Activated naive CD4-positive, alpha-beta T cell treated with anti-CD3 and anti-CD28 coated beads, Interleukin-2, amount 10 ng/mL, durations not matched to agents 7 days and 5 days (primary cell): ENCODE measurements at regions of chr3 and their contacts with region 1.

Region 1: DNA sequence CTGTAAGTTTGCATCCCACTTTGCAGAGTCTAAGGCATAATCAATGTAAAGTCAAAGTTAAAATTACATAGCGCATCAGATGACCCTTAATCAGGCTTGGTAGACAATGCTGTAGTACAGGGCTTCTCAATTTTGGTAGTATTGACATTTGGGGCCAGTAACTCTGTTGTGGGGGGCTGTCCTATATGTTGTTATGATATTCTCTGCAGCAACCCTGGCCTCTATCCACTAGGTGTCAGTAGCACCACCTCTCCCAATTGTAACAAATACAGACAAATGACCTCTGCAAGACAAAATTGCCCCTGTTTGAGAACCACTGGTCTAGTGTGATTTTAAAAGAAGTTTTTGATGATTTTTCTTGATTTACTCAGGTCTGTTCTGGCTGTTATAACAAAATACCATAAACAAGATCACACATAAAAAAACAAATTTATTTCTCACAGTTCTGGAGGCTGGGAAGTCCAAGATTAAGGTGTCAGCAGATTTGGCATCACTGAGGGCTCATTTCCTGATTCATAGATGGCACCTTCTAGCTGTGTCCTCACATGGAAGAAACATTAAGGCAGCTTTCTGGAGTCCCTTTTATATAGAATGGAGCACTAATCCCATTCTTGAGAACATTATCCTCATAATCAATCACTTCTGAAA is 37.6 kb upstream of the SLC9A9 start:
- DNase-seq: peak; percentile 39
- H3K4me3 Mint-ChIP-seq: no peak overlapping the region
- H3K27ac Mint-ChIP-seq: no peak overlapping the region
- H3K4me1 Mint-ChIP-seq: no peaks in the 10 kb centered on the region
- H3K27me3 Mint-ChIP-seq: peaks cover 25% of the 10 kb centered on the region

Region 2: DNA sequence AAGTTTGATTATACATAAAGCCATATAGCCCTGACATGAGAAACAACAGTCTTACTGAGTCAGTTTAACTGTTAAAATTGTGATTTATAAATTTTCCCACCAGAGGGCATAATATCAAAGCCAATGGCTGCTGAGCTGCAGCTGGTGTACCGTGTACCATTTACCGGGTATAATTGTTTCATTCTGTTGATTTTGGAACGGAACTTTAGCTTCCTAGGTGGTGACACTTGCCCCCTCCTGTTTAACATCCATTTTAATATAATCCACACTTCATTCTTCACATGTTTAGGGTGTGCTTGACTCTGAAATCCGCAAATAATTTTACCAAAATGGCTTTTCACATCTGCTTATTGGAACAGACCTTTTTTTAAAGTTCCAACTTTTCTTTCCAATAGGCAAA is 110.4 kb before region 1 on chr3:
- CTCF ChIA-PET with region 1: interaction called, 10 read pairs
- DNase-seq: no peak
- H3K4me3 Mint-ChIP-seq: no peak overlapping the region
- H3K27ac Mint-ChIP-seq: no peak overlapping the region
- H3K4me1 Mint-ChIP-seq: no peaks in the 10 kb centered on the region
- H3K27me3 Mint-ChIP-seq: no peaks in the 10 kb centered on the region

Region 3: DNA sequence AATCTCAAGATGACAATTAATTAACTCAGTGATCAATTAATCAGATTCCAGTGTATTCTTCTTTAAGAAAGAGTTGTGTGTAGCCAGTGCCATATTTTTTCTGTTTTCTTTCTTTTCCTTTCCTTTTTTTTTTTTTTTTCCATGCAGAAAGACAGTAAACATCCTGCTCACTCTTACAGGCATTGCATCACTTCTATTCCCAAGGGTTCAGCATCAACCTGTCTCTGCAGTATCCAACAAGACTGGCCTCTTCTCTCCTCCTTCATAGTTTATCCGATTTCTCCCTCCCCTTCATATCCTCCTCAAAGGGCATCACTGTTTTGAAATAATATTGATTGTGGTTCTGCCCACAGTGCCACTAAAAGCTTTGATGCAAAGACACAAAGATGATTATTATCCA is 20.6 kb before region 1 on chr3:
- CTCF ChIA-PET with region 1: interaction called, 14 read pairs
- DNase-seq: no peak
- H3K4me3 Mint-ChIP-seq: no peak overlapping the region
- H3K27ac Mint-ChIP-seq: no peak overlapping the region
- H3K4me1 Mint-ChIP-seq: no peaks in the 10 kb centered on the region
- H3K27me3 Mint-ChIP-seq: peaks cover 42% of the 10 kb centered on the region